ENCODE measurements at regions of chr22 and their contacts with region 1.

Region 1: GRCh38 chr22:46122511-46122971 is 27.8 kb upstream of the PPARA start:
- DNase-seq: no peak
- H3K4me3 ChIP-seq: no peak overlapping the region
- H3K27ac ChIP-seq: no peak overlapping the region
- H3K4me1 ChIP-seq: peaks cover 6% of the 10 kb centered on the region
- H3K27me3 ChIP-seq: no peaks in the 10 kb centered on the region
- CTCF ChIP-seq: peak; percentile 90 to 96 (median 96)
- POLR2A ChIP-seq: no peak

Region 2: GRCh38 chr22:46023558-46023981 is 99.0 kb before region 1 on chr22:
- intact Hi-C with region 1: no loop called
- DNase-seq: no peak
- H3K4me3 ChIP-seq: no peak overlapping the region
- H3K27ac ChIP-seq: no peak overlapping the region
- H3K4me1 ChIP-seq: peaks cover 4% of the 10 kb centered on the region
- H3K27me3 ChIP-seq: no peaks in the 10 kb centered on the region
- CTCF ChIP-seq: no peak
- POLR2A ChIP-seq: no peak

Region 3: GRCh38 chr22:46296257-46297150 is 174.0 kb after region 1 on chr22 and contains the start of gene GTSE1:
- intact Hi-C with region 1: loop called (anchors 5 kb)
- DNase-seq: peak; percentile 97
- H3K4me3 ChIP-seq: peak within 1 kb of the TSS; percentile 33 to 35
- H3K27ac ChIP-seq: peak within 1 kb of the TSS; percentile 85 to 92
- H3K4me1 ChIP-seq: no peaks in the 10 kb centered on the region
- H3K27me3 ChIP-seq: no peaks in the 10 kb centered on the region
- CTCF ChIP-seq: peak in 3 of 4 experiments; percentile 14 to 49 (median 43)
- POLR2A ChIP-seq: peak; percentile 56
- total RNA-seq, gene GTSE1: 0.46 to 4.8 TPM

Region 4: GRCh38 chr22:46309526-46310085 is 187.1 kb after region 1 on chr22:
- intact Hi-C with region 1: loop called (anchors 1 kb)
- DNase-seq: no peak
- H3K4me3 ChIP-seq: no peak overlapping the region
- H3K27ac ChIP-seq: no peak overlapping the region
- H3K4me1 ChIP-seq: no peaks in the 10 kb centered on the region
- H3K27me3 ChIP-seq: no peaks in the 10 kb centered on the region
- CTCF ChIP-seq: no peak
- POLR2A ChIP-seq: no peak

Measured in prostate gland (tissue), 2 donors.